ENCODE measurements at regions of chr18 and their contacts with region 1.

Region 1: DNA sequence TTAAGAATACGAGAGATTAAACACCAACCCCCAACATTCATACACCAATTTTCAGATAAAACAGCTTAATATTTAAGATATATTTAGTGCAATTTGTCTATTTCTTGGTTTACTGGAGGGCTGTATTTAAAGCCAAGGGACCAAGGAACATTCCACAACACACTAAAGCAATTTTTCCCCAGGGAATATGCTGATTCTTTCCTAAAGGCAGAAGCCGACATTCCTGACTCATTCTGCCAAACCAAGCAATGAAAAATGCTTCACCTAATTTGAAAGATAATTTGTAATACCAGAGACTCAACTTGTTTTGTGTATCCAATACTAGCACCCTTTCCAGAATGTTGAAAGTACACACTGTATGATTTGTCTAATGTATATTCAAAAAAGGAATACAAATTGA is 1267.6 kb upstream of the PIK3C3 start:
- DNase-seq: no peak
- ATAC-seq: no peak
- H3K4me3 ChIP-seq: no peak overlapping the region
- H3K4me3 Mint-ChIP-seq: no peak overlapping the region
- H3K27ac ChIP-seq: no peak overlapping the region
- H3K27ac Mint-ChIP-seq: no peak overlapping the region
- H3K4me1 ChIP-seq: no peaks in the 10 kb centered on the region
- H3K4me1 Mint-ChIP-seq: no peaks in the 10 kb centered on the region
- H3K27me3 ChIP-seq: no peaks in the 10 kb centered on the region
- H3K27me3 Mint-ChIP-seq: no peaks in the 10 kb centered on the region
- CTCF ChIP-seq: no peak

Region 2: GRCh38 chr18:40676668-40677067 is 10.7 kb before region 1 on chr18:
- CTCF ChIA-PET with region 1: no interaction called
- POLR2A ChIA-PET with region 1: no interaction called
- intact Hi-C with region 1: loop called (anchors 1 kb)
- DNase-seq: no peak
- ATAC-seq: no peak
- H3K4me3 ChIP-seq: no peak overlapping the region
- H3K4me3 Mint-ChIP-seq: no peak overlapping the region
- H3K27ac ChIP-seq: no peak overlapping the region
- H3K27ac Mint-ChIP-seq: no peak overlapping the region
- H3K4me1 ChIP-seq: no peaks in the 10 kb centered on the region
- H3K4me1 Mint-ChIP-seq: no peaks in the 10 kb centered on the region
- H3K27me3 ChIP-seq: no peaks in the 10 kb centered on the region
- H3K27me3 Mint-ChIP-seq: no peaks in the 10 kb centered on the region
- CTCF ChIP-seq: no peak

Measured in CD4-positive, alpha-beta T cell (primary cell).